Panc1 (cell line): ENCODE measurements at regions of chr14 and their contacts with region 1.

Region 1: GRCh38 chr14:61837336-61838229 is 75.4 kb downstream of the SNAPC1 start:
- DNase-seq: peak; percentile 67
- ATAC-seq: peak; percentile 98
- H3K4me3 ChIP-seq: no peak overlapping the region
- H3K27ac ChIP-seq: no peak overlapping the region
- H3K4me1 ChIP-seq: no peaks in the 10 kb centered on the region
- H3K27me3 ChIP-seq: no peaks in the 10 kb centered on the region; the same call in 1 of the 2 replicates
- CTCF ChIP-seq: peak; percentile 87

Region 2: GRCh38 chr14:61461808-61462275 is 375.7 kb before region 1 on chr14:
- CTCF ChIA-PET with region 1: no interaction called
- POLR2A ChIA-PET with region 1: no interaction called
- in situ Hi-C with region 1: no loop called
- intact Hi-C with region 1: loop called (anchors 2 kb)
- DNase-seq: no peak
- ATAC-seq: peak; percentile 73
- H3K4me3 ChIP-seq: no peak overlapping the region
- H3K27ac ChIP-seq: no peak overlapping the region
- H3K4me1 ChIP-seq: no peaks in the 10 kb centered on the region; the same call in 1 of the 2 replicates
- H3K27me3 ChIP-seq: no peaks in the 10 kb centered on the region
- CTCF ChIP-seq: peak; percentile 61

Region 3: DNA sequence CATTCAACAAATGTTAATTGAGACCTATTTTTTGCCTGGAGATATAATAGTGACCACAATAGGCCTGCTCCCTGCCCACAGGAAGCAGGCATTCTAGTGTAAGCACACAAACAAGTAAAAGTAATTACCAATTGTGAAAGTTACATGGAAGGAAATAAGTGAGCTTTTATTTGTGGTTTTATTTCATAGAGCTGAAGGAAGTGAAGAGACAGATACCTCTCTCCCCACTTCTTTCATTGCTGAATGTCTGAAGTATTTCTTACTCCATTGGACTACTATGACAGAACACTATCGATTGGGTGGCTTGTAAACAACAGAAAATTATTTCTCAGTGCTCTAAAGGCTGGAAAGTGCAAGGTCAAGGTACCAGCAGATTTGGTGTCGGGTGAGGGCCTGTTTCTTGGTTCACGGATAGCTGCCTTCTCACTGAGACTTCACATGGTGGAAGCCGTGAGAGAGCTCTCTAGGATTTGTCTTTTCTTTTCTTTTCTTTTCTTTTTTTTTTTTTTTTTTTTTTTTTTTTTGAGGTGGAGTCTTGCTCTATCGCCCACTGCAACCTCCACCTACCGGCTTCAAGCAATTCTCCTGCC is 332.6 kb before region 1 on chr14:
- CTCF ChIA-PET with region 1: interaction called, 19 read pairs
- POLR2A ChIA-PET with region 1: no interaction called
- in situ Hi-C with region 1: no loop called
- intact Hi-C with region 1: no loop called
- DNase-seq: no peak
- ATAC-seq: no peak
- H3K4me3 ChIP-seq: no peak overlapping the region
- H3K27ac ChIP-seq: no peak overlapping the region
- H3K4me1 ChIP-seq: no peaks in the 10 kb centered on the region
- H3K27me3 ChIP-seq: no peaks in the 10 kb centered on the region
- CTCF ChIP-seq: no peak

Region 4: GRCh38 chr14:61822458-61822857 is 15.1 kb before region 1 on chr14:
- CTCF ChIA-PET with region 1: no interaction called
- POLR2A ChIA-PET with region 1: interaction called, 12 read pairs
- in situ Hi-C with region 1: no loop called
- intact Hi-C with region 1: no loop called
- DNase-seq: no peak
- ATAC-seq: no peak
- H3K4me3 ChIP-seq: no peak overlapping the region
- H3K27ac ChIP-seq: no peak overlapping the region
- H3K4me1 ChIP-seq: no peaks in the 10 kb centered on the region
- H3K27me3 ChIP-seq: peaks cover 1% of the 10 kb centered on the region; the same call in 1 of the 2 replicates
- CTCF ChIP-seq: no peak